ENCODE measurements at regions of chr3 and their contacts with region 1.

Region 1: DNA sequence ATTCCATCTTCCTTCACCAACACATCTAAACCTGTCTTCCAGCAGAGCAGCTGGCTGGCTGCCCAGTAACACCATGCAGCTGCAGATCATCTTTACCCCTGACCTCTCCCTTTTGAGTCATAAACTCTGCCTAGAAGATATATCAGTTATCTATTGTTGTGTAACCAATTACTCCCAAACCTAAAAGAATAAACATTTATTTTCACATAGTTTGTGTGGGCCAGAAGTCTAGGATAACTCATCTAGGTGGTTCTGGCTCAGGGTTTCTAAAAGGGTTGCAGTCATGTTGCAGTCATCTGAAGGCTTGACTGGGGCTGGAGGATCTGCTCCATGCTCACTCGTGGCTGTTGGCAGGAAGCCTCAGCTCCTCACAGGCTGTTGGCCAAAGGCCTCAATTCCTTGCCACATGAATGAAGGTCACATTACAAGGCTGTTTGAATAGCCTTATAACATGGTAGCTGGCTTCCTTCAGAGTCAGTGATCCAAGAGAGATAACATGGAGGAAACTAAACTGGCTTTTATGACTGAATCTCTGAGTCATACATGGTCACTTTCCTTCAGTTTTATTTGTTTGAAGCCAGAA is 92.8 kb downstream of the GOLIM4 start:
- DNase-seq: peak; percentile 69
- H3K4me3 ChIP-seq: no peak overlapping the region
- H3K27ac ChIP-seq: no peak overlapping the region
- H3K4me1 ChIP-seq: peaks cover 4% of the 10 kb centered on the region
- H3K27me3 ChIP-seq: no peaks in the 10 kb centered on the region
- CTCF ChIP-seq: no peak

Region 2: DNA sequence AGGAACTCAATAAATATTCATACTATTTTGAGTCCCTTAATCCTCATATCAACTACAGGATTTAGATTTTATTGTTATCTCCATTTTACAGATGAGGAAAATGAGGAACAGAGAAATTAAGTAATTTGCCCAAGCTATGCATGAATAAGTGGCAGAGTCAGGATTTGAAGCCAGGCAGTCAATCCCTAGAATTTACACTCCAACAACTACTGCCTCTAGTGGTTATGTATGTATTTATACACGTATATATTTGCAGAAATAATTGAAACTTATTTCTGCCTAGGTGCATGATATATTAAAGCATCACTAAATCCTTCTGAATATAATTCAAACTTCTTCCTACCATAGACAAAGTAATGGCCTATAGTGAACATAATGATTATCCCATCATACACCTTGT is 129.9 kb before region 1 on chr3:
- CTCF ChIA-PET with region 1: no interaction called
- dilution Hi-C with region 1: no loop called
- in situ Hi-C with region 1: no loop called
- intact Hi-C with region 1: no loop called
- DNase-seq: no peak
- H3K4me3 ChIP-seq: no peak overlapping the region
- H3K27ac ChIP-seq: no peak overlapping the region
- H3K4me1 ChIP-seq: peaks cover 2% of the 10 kb centered on the region
- H3K27me3 ChIP-seq: no peaks in the 10 kb centered on the region
- CTCF ChIP-seq: peak; percentile 24 to 29

Region 3: GRCh38 chr3:167909504-167909896 is 93.4 kb before region 1 on chr3:
- CTCF ChIA-PET with region 1: no interaction called
- dilution Hi-C with region 1: loop called (anchors 5 kb)
- in situ Hi-C with region 1: no loop called
- intact Hi-C with region 1: no loop called
- DNase-seq: no peak
- H3K4me3 ChIP-seq: no peak overlapping the region
- H3K27ac ChIP-seq: no peak overlapping the region
- H3K4me1 ChIP-seq: no peaks in the 10 kb centered on the region
- H3K27me3 ChIP-seq: no peaks in the 10 kb centered on the region
- CTCF ChIP-seq: no peak

Region 4: GRCh38 chr3:168260859-168261258 is 258.0 kb after region 1 on chr3:
- CTCF ChIA-PET with region 1: no interaction called
- dilution Hi-C with region 1: no loop called
- in situ Hi-C with region 1: no loop called
- intact Hi-C with region 1: no loop called
- DNase-seq: no peak
- H3K4me3 ChIP-seq: no peak overlapping the region
- H3K27ac ChIP-seq: no peak overlapping the region
- H3K4me1 ChIP-seq: no peaks in the 10 kb centered on the region
- H3K27me3 ChIP-seq: no peaks in the 10 kb centered on the region
- CTCF ChIP-seq: no peak